A673 (cell line): ENCODE measurements at regions of chr4 and their contacts with region 1.

Region 1: GRCh38 chr4:105509291-105509690 is 35.4 kb upstream of the PPA2 start:
- DNase-seq: no peak
- H3K4me3 ChIP-seq: no peak overlapping the region
- H3K27ac ChIP-seq: no peak overlapping the region
- H3K4me1 ChIP-seq: no peaks in the 10 kb centered on the region
- H3K27me3 ChIP-seq: no peaks in the 10 kb centered on the region
- CTCF ChIP-seq: no peak

Region 2: GRCh38 chr4:105496899-105497298 is 12.4 kb before region 1 on chr4:
- CTCF ChIA-PET with region 1: no interaction called
- POLR2A ChIA-PET with region 1: interaction called, 14 read pairs
- intact Hi-C with region 1: no loop called
- DNase-seq: peak; percentile 28
- H3K4me3 ChIP-seq: no peak overlapping the region
- H3K27ac ChIP-seq: no peak overlapping the region
- H3K4me1 ChIP-seq: no peaks in the 10 kb centered on the region
- H3K27me3 ChIP-seq: no peaks in the 10 kb centered on the region
- CTCF ChIP-seq: peak; percentile 43